Naive thymus-derived CD4-positive, alpha-beta T cell (primary cell): ENCODE measurements at regions of chr13 and their contacts with region 1.

Region 1: DNA sequence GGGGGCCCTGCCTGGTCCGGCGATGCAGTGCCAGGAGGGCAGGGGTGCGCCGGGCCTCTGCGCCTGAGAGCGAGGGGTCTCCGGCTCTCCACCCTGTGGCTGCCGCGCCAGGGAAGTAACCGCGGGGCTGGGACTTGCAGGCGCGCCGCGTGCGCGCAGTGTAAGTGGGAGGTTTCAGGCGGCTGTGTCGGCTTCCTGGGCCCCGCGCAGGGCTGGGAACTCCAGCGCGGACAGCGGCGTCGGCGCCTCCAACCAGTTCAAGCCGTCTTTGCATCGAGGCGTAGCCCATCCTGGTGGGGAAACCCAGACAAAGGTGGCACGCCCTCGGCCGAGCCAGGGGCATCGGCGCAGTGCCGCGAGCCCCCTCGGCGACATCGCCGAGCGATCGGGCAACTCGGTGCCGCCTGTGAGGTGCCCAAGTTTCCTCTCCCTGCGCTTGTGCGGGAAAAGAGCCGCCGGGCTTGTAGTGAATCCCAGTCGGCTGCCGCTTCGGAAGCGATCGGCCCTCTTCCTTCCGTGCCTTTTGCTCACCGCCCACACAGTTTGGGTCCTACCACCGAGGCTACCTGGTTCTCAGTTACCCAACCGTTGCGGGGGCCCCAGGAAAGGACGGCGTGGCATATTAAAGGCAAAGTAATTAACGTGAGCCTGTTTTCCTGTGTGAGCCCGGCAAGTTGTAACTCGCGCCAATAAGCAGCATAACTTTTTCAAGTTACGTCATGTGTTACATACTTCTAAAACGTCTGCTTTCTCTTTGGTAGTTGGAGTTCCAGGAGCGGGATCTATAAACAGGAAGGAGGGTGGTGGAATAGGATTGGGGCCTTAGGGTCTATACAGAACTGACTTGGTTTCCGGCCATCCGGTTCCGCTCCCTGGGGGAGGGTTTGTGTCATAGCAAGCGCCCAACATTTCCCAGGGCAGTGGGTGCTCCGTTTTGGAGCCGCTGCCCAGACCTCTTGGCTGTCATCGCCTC is 1.2 kb downstream of the LRCH1 start:
- DNase-seq: peak; percentile 52 to 77 (median 64)
- ATAC-seq: peak; percentile 77
- H3K4me3 ChIP-seq: peak overlapping the region; percentile 90
- H3K4me3 Mint-ChIP-seq: peak overlapping the region; percentile 92 to 99 (median 95)
- H3K27ac ChIP-seq: peak overlapping the region; percentile 82
- H3K27ac Mint-ChIP-seq: peak overlapping the region; percentile 70 to 96 (median 88)
- H3K4me1 ChIP-seq: peaks cover 26 to 29% of the 10 kb centered on the region in 2 donors
- H3K4me1 Mint-ChIP-seq: peaks cover 32 to 61% (median 55%) of the 10 kb centered on the region in 7 donors
- H3K27me3 ChIP-seq: no peaks in the 10 kb centered on the region
- H3K27me3 Mint-ChIP-seq: peaks cover 0 to 5% (median 0%) of the 10 kb centered on the region in 5 donors

Region 2: GRCh38 chr13:45417790-45418534 is 1136.2 kb before region 1 on chr13 and contains the start of gene SLC25A30:
- CTCF ChIA-PET with region 1: no interaction called
- POLR2A ChIA-PET with region 1: no interaction called
- intact Hi-C with region 1: loop called in 1 of 2 experiments (anchors 2 kb)
- DNase-seq: peak; percentile 73 to 90 (median 87)
- ATAC-seq: peak; percentile 97
- H3K4me3 ChIP-seq: peak within 1 kb of the TSS; percentile 97
- H3K4me3 Mint-ChIP-seq: peak within 1 kb of the TSS; percentile 90 to 98 (median 96)
- H3K27ac ChIP-seq: peak within 1 kb of the TSS; percentile 79
- H3K27ac Mint-ChIP-seq: peak within 1 kb of the TSS; percentile 92 to 99 (median 96)
- H3K4me1 ChIP-seq: peaks cover 4 to 21% of the 10 kb centered on the region in 2 donors
- H3K4me1 Mint-ChIP-seq: peaks cover 0 to 36% (median 27%) of the 10 kb centered on the region in 7 donors
- H3K27me3 ChIP-seq: no peaks in the 10 kb centered on the region
- H3K27me3 Mint-ChIP-seq: no peaks in the 10 kb centered on the region
- total RNA-seq, gene SLC25A30: 13.3 to 29.4 (median 23.6) TPM

Region 3: GRCh38 chr13:46295491-46296114 is 258.6 kb before region 1 on chr13:
- CTCF ChIA-PET with region 1: no interaction called
- POLR2A ChIA-PET with region 1: no interaction called
- intact Hi-C with region 1: loop called in 1 of 2 experiments (anchors 1 kb)
- DNase-seq: peak in 8 of 9 donors; percentile 28 to 90 (median 88)
- ATAC-seq: peak; percentile 94
- H3K4me3 ChIP-seq: peak overlapping the region; percentile 12
- H3K4me3 Mint-ChIP-seq: peak overlapping the region; percentile 4 to 87 (median 76)
- H3K27ac ChIP-seq: peak overlapping the region; percentile 77
- H3K27ac Mint-ChIP-seq: peak overlapping the region; percentile 92 to 99 (median 96)
- H3K4me1 ChIP-seq: peaks cover 35 to 52% of the 10 kb centered on the region in 2 donors
- H3K4me1 Mint-ChIP-seq: peaks cover 36 to 73% (median 68%) of the 10 kb centered on the region in 7 donors
- H3K27me3 ChIP-seq: no peaks in the 10 kb centered on the region
- H3K27me3 Mint-ChIP-seq: no peaks in the 10 kb centered on the region

Region 4: DNA sequence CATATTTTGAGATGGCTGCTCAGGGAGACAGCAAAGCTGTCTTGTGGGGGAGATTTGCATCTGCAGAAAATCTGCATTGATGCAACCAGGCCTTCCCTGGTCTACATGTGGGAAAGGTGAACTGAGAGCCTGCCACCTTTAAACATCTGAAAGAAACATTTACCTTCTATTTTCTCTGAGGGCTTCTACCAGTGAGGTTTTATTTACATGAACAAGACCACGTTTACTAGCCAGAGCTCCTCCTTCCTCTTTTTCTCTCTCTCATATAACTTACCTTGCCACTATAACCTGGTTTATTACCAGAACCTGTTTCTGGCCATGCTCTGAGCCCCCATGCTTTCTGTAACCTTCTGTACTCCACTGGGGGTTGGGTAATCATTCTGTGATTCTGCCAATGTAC is 152.7 kb before region 1 on chr13:
- CTCF ChIA-PET with region 1: no interaction called
- POLR2A ChIA-PET with region 1: no interaction called
- intact Hi-C with region 1: no loop called
- DNase-seq: no peak
- ATAC-seq: no peak
- H3K4me3 ChIP-seq: no peak overlapping the region
- H3K4me3 Mint-ChIP-seq: no peak overlapping the region
- H3K27ac ChIP-seq: no peak overlapping the region
- H3K27ac Mint-ChIP-seq: no peak overlapping the region
- H3K4me1 ChIP-seq: peaks cover 0 to 6% of the 10 kb centered on the region in 2 donors
- H3K4me1 Mint-ChIP-seq: peaks cover 9 to 18% (median 12%) of the 10 kb centered on the region in 7 donors
- H3K27me3 ChIP-seq: no peaks in the 10 kb centered on the region
- H3K27me3 Mint-ChIP-seq: peaks cover 0 to 4% (median 0%) of the 10 kb centered on the region in 5 donors

Region 5: GRCh38 chr13:46507981-46508380 is 46.2 kb before region 1 on chr13:
- CTCF ChIA-PET with region 1: no interaction called
- POLR2A ChIA-PET with region 1: no interaction called
- intact Hi-C with region 1: no loop called
- DNase-seq: no peak
- ATAC-seq: no peak
- H3K4me3 ChIP-seq: no peak overlapping the region
- H3K4me3 Mint-ChIP-seq: no peak overlapping the region
- H3K27ac ChIP-seq: no peak overlapping the region
- H3K27ac Mint-ChIP-seq: no peak overlapping the region
- H3K4me1 ChIP-seq: no peaks in the 10 kb centered on the region
- H3K4me1 Mint-ChIP-seq: no peaks in the 10 kb centered on the region
- H3K27me3 ChIP-seq: no peaks in the 10 kb centered on the region
- H3K27me3 Mint-ChIP-seq: peaks cover 0 to 24% (median 7%) of the 10 kb centered on the region in 5 donors

Region 6: GRCh38 chr13:46593398-46593797 is 39.2 kb after region 1 on chr13:
- CTCF ChIA-PET with region 1: interaction called, 3 read pairs
- POLR2A ChIA-PET with region 1: no interaction called
- intact Hi-C with region 1: loop called (anchors 1 kb)
- DNase-seq: peak; percentile 14 to 85 (median 77)
- ATAC-seq: peak; percentile 95
- H3K4me3 ChIP-seq: no peak overlapping the region
- H3K4me3 Mint-ChIP-seq: peak overlapping the region; percentile 52 to 83 (median 66)
- H3K27ac ChIP-seq: peak overlapping the region; percentile 54
- H3K27ac Mint-ChIP-seq: peak overlapping the region in 8 of 9 donors; percentile 9 to 92 (median 83)
- H3K4me1 ChIP-seq: peaks cover 11 to 42% of the 10 kb centered on the region in 2 donors
- H3K4me1 Mint-ChIP-seq: peaks cover 45 to 80% (median 74%) of the 10 kb centered on the region in 7 donors
- H3K27me3 ChIP-seq: no peaks in the 10 kb centered on the region
- H3K27me3 Mint-ChIP-seq: no peaks in the 10 kb centered on the region

Region 7: DNA sequence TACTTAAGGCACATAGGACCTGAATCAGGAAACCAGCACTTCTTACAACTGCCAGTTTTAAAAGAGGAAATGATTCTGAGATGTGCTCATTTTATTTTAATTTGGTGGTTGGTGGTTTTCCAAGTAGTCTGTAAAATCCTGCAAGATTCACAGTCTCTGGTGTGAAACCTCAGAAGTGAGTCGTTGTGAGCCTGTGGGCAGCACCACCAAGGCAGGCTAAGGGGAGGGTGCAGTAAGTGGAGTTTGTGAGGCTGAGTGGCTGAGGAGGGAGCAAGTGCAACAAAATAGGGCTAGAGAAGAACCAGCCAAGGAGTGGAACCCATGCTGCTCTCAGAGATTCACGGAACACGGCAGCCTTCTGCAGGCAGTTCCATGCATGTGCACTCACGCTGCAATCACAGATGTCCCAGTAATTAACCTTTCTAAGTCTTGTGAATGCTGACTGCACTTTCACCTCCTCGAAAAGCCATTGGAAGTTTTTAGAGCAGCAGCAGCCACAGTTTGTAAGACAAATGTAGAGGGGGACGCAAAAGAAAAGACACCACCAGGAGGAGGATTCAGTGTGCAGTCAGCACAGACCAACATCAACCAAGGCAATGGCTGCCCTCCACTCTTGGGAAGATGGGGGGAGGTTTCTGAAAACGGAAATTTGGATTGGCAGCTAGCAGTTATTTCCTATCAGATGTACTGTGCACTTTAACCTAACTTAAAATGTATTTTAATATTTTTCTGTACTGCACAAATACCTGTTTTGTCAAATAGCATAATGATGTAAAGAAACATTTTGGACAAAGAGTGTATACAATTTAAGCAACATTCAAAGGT is 197.9 kb after region 1 on chr13:
- CTCF ChIA-PET with region 1: interaction called, 7 read pairs
- POLR2A ChIA-PET with region 1: no interaction called
- intact Hi-C with region 1: loop called (anchors 1 kb)
- DNase-seq: peak in 8 of 9 donors; percentile 11 to 57 (median 23)
- ATAC-seq: peak; percentile 92
- H3K4me3 ChIP-seq: no peak overlapping the region
- H3K4me3 Mint-ChIP-seq: peak overlapping the region in 9 of 10 donors; percentile 5 to 71 (median 59)
- H3K27ac ChIP-seq: peak overlapping the region; percentile 16
- H3K27ac Mint-ChIP-seq: peak overlapping the region in 8 of 9 donors; percentile 39 to 85 (median 78)
- H3K4me1 ChIP-seq: peaks cover 11 to 13% of the 10 kb centered on the region in 2 donors
- H3K4me1 Mint-ChIP-seq: peaks cover 10 to 44% (median 34%) of the 10 kb centered on the region in 7 donors
- H3K27me3 ChIP-seq: no peaks in the 10 kb centered on the region
- H3K27me3 Mint-ChIP-seq: no peaks in the 10 kb centered on the region

Region 8: GRCh38 chr13:46817095-46817494 is 262.9 kb after region 1 on chr13:
- CTCF ChIA-PET with region 1: no interaction called
- POLR2A ChIA-PET with region 1: no interaction called
- intact Hi-C with region 1: no loop called
- DNase-seq: no peak
- ATAC-seq: peak; percentile 27
- H3K4me3 ChIP-seq: no peak overlapping the region
- H3K4me3 Mint-ChIP-seq: no peak overlapping the region
- H3K27ac ChIP-seq: no peak overlapping the region
- H3K27ac Mint-ChIP-seq: no peak overlapping the region
- H3K4me1 ChIP-seq: no peaks in the 10 kb centered on the region
- H3K4me1 Mint-ChIP-seq: peaks cover 0 to 3% (median 0%) of the 10 kb centered on the region in 7 donors
- H3K27me3 ChIP-seq: no peaks in the 10 kb centered on the region
- H3K27me3 Mint-ChIP-seq: peaks cover 3 to 25% (median 9%) of the 10 kb centered on the region in 5 donors

Region 9: GRCh38 chr13:48532506-48533499 is 1978.6 kb after region 1 on chr13 and contains the start of gene RCBTB2:
- CTCF ChIA-PET with region 1: no interaction called
- POLR2A ChIA-PET with region 1: no interaction called
- intact Hi-C with region 1: loop called in 1 of 2 experiments (anchors 5 kb)
- DNase-seq: peak; percentile 97 to 100 (median 99)
- ATAC-seq: peak; percentile 92
- H3K4me3 ChIP-seq: peak within 1 kb of the TSS; percentile 80
- H3K4me3 Mint-ChIP-seq: peak within 1 kb of the TSS; percentile 83 to 99 (median 94)
- H3K27ac ChIP-seq: peak within 1 kb of the TSS; percentile 96
- H3K27ac Mint-ChIP-seq: peak within 1 kb of the TSS; percentile 98 to 100 (median 99)
- H3K4me1 ChIP-seq: peaks cover 10 to 16% of the 10 kb centered on the region in 2 donors
- H3K4me1 Mint-ChIP-seq: peaks cover 11 to 44% (median 31%) of the 10 kb centered on the region in 7 donors
- H3K27me3 ChIP-seq: no peaks in the 10 kb centered on the region
- H3K27me3 Mint-ChIP-seq: peaks cover 0 to 18% (median 0%) of the 10 kb centered on the region in 5 donors
- total RNA-seq, gene RCBTB2: 7.6 to 17.8 (median 10.1) TPM